CD4-positive, alpha-beta memory T cell (primary cell): ENCODE measurements at regions of chr1 and their contacts with region 1.

Region 1: DNA sequence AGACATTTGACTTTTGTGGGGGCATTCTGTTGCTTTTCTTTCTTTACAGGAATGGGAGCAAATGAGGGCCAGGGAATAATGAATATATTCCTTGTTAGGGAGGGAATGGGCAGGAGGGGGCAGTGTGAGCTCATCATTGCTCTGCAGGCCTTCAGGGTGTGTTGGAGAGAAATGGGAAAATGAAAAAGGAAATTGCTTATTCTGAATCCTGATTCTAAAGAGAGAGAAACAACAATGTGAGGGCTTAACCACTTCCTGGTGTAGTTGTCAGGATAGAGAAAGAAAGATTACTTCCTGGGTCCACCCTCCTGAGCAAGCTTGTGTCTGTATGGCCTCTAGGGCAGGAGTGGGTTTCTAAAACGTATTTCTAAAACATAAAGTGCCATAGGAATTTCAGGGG is 28.3 kb downstream of the VANGL2 start:
- DNase-seq: peak in 3 of 5 donors; percentile 41 to 47 (median 41)
- H3K4me3 ChIP-seq: peak overlapping the region in 1 of 2 donors; percentile 11
- H3K4me3 Mint-ChIP-seq: peak overlapping the region; percentile 10 to 74 (median 60)
- H3K27ac ChIP-seq: peak overlapping the region; percentile 57
- H3K27ac Mint-ChIP-seq: peak overlapping the region; percentile 76 to 96 (median 92)
- H3K4me1 ChIP-seq: peaks cover 68% of the 10 kb centered on the region
- H3K4me1 Mint-ChIP-seq: peaks cover 49 to 63% (median 57%) of the 10 kb centered on the region in 4 donors
- H3K27me3 ChIP-seq: no peaks in the 10 kb centered on the region
- H3K27me3 Mint-ChIP-seq: no peaks in the 10 kb centered on the region

Region 2: DNA sequence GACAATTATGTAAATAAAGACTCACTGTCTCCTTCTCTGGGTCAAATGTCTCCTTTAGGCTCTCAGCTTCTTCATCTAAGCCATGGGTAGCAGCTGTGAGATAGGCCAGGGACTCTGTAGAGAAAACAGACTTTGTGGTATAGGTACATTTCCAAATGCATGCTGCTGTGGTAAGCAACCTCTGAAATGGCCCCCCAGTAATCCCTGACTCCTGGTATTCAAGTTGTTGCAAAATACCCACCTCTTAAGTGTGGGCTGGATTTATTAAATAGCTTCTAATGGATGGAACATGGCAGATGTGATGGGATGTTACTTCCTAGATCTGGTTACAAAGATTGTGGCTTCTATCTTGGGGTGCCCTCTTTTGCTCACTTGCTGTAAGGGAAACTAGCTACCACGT is 132.6 kb before region 1 on chr1:
- CTCF ChIA-PET with region 1: no interaction called
- POLR2A ChIA-PET with region 1: no interaction called
- intact Hi-C with region 1: no loop called
- DNase-seq: no peak
- H3K4me3 ChIP-seq: no peak overlapping the region
- H3K4me3 Mint-ChIP-seq: no peak overlapping the region
- H3K27ac ChIP-seq: no peak overlapping the region
- H3K27ac Mint-ChIP-seq: peak overlapping the region in 3 of 7 donors; percentile 30 to 57 (median 31)
- H3K4me1 ChIP-seq: no peaks in the 10 kb centered on the region
- H3K4me1 Mint-ChIP-seq: peaks cover 3 to 4% (median 4%) of the 10 kb centered on the region in 4 donors
- H3K27me3 ChIP-seq: no peaks in the 10 kb centered on the region
- H3K27me3 Mint-ChIP-seq: no peaks in the 10 kb centered on the region

Region 3: GRCh38 chr1:160483505-160484185 is 55.0 kb after region 1 on chr1:
- CTCF ChIA-PET with region 1: interaction called, 14 read pairs
- POLR2A ChIA-PET with region 1: interaction called, 10 read pairs
- intact Hi-C with region 1: loop called (anchors 2 kb)
- DNase-seq: no peak
- H3K4me3 ChIP-seq: no peak overlapping the region
- H3K4me3 Mint-ChIP-seq: peak overlapping the region in 1 of 8 donors; percentile 26
- H3K27ac ChIP-seq: no peak overlapping the region
- H3K27ac Mint-ChIP-seq: peak overlapping the region; percentile 20 to 89 (median 60)
- H3K4me1 ChIP-seq: peaks cover 24% of the 10 kb centered on the region
- H3K4me1 Mint-ChIP-seq: peaks cover 36 to 53% (median 44%) of the 10 kb centered on the region in 4 donors
- H3K27me3 ChIP-seq: no peaks in the 10 kb centered on the region
- H3K27me3 Mint-ChIP-seq: no peaks in the 10 kb centered on the region

Region 4: GRCh38 chr1:160519642-160520435 is 91.2 kb after region 1 on chr1:
- CTCF ChIA-PET with region 1: interaction called, 6 read pairs
- POLR2A ChIA-PET with region 1: interaction called, 26 read pairs
- intact Hi-C with region 1: loop called (anchors 1 kb)
- DNase-seq: peak; percentile 49 to 62 (median 56)
- H3K4me3 ChIP-seq: peak overlapping the region; percentile 69 to 71
- H3K4me3 Mint-ChIP-seq: peak overlapping the region; percentile 91 to 98 (median 95)
- H3K27ac ChIP-seq: peak overlapping the region; percentile 60
- H3K27ac Mint-ChIP-seq: peak overlapping the region; percentile 84 to 98 (median 95)
- H3K4me1 ChIP-seq: peaks cover 80% of the 10 kb centered on the region
- H3K4me1 Mint-ChIP-seq: peaks cover 78 to 97% (median 81%) of the 10 kb centered on the region in 4 donors
- H3K27me3 ChIP-seq: no peaks in the 10 kb centered on the region
- H3K27me3 Mint-ChIP-seq: no peaks in the 10 kb centered on the region

Region 5: DNA sequence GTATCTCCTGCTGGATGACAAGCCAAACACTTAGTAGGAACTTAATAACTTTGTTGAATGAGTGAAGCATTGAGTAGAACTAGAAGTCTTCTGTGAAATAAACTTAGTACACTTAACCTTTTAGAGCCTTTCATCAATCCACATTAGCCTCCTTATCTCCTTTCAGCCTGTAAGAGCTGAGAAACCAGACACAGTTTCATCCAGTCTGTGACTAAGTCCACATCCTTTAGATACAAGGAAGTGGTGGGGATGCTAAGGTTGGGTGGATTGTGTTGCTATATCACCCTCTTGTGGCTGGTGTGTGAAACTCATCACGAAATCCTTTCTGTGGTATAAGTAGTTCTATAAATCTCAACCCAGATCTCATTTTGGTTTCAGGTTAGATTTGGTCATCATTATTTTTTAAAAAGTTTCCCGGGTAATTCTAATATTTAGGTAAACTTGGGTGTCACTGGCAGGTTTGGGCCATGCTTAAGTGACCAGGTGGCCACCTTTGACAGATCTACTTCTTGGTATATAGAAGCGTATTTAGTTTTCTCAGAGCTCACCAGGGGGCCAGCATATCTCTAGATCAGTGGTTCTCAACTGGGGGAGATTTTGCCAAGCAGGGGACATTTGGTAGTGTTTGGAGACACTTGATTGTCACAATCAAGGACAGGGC is 178.5 kb after region 1 on chr1:
- CTCF ChIA-PET with region 1: interaction called, 115 read pairs
- POLR2A ChIA-PET with region 1: interaction called, 53 read pairs
- intact Hi-C with region 1: loop called (anchors 1 kb)
- DNase-seq: peak; percentile 79 to 85 (median 81)
- H3K4me3 ChIP-seq: no peak overlapping the region
- H3K4me3 Mint-ChIP-seq: peak overlapping the region in 6 of 8 donors; percentile 3 to 68 (median 37)
- H3K27ac ChIP-seq: peak overlapping the region; percentile 42
- H3K27ac Mint-ChIP-seq: peak overlapping the region; percentile 62 to 93 (median 79)
- H3K4me1 ChIP-seq: peaks cover 56% of the 10 kb centered on the region
- H3K4me1 Mint-ChIP-seq: peaks cover 42 to 62% (median 52%) of the 10 kb centered on the region in 4 donors
- H3K27me3 ChIP-seq: no peaks in the 10 kb centered on the region
- H3K27me3 Mint-ChIP-seq: no peaks in the 10 kb centered on the region